Calu3 (cell line): ENCODE measurements at regions of chr5 and their contacts with region 1.

Region 1: DNA sequence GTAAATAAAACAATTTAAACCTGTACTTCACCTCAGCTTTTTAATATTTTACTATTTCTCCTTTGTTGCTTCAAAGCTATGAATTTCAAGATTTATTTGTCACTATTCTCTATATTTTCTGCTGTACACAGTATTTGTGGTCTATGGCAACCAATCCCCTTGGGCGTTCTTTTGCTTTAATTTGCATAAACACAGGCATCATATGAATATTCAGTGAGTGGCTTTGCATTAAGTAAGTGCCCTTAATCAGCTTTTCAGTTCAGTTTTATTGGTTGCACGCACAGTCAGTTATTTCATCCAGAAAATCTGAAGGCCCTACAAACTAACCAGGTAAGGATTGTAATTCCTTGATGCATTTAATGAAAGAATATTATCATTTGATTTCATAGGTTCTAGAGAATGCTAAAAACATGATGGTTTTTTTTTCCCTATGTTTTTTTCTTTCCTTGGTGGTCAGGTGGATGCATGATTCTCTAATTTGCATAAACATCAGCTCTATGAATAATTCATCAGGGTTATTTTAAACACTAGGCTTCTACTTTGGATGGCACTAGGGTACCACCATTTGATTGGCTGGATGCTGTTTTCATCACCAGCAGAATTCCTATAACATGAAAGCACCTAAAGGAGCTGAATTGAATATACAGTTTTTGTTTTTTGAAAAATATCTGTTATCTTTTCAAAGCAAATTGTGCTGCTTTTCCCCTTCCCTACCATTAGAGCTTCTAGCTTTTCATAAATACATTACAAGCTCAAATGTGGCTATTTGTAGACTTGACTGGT is 249.2 kb upstream of the CCNH start:
- DNase-seq: no peak
- H3K4me3 Mint-ChIP-seq: no peak overlapping the region
- H3K27ac Mint-ChIP-seq: no peak overlapping the region
- H3K4me1 Mint-ChIP-seq: no peaks in the 10 kb centered on the region
- H3K27me3 Mint-ChIP-seq: no peaks in the 10 kb centered on the region
- CTCF ChIP-seq: no peak

Region 2: GRCh38 chr5:87421307-87421706 is 240.7 kb before region 1 on chr5:
- CTCF ChIA-PET with region 1: no interaction called
- intact Hi-C with region 1: loop called (anchors 10 kb)
- DNase-seq: no peak
- H3K4me3 Mint-ChIP-seq: no peak overlapping the region
- H3K27ac Mint-ChIP-seq: no peak overlapping the region
- H3K4me1 Mint-ChIP-seq: peaks cover 9% of the 10 kb centered on the region
- H3K27me3 Mint-ChIP-seq: no peaks in the 10 kb centered on the region
- CTCF ChIP-seq: no peak

Region 3: GRCh38 chr5:88290801-88291200 is 628.8 kb after region 1 on chr5:
- CTCF ChIA-PET with region 1: no interaction called
- intact Hi-C with region 1: no loop called
- DNase-seq: no peak
- H3K4me3 Mint-ChIP-seq: no peak overlapping the region
- H3K27ac Mint-ChIP-seq: no peak overlapping the region
- H3K4me1 Mint-ChIP-seq: no peaks in the 10 kb centered on the region
- H3K27me3 Mint-ChIP-seq: no peaks in the 10 kb centered on the region
- CTCF ChIP-seq: no peak